Activated T-helper 1 cell treated with anti-CD3 and anti-CD28 coated beads, Interleukin-12 subunit alpha, Interleukin-12 subunit beta, Interleukin-2, Interleukin-4 antibody, amounts not matched to agents 30 ng/mL and 10 ng/mL and 1 ng/mL, durations not matched to agents 14 hours and 24 hours and 36 hours (primary cell): ENCODE measurements at regions of chr17 and their contacts with region 1.

Region 1: GRCh38 chr17:29760761-29761696 is 138.3 kb upstream of the CORO6 start:
- DNase-seq: peak; percentile 91
- H3K4me3 Mint-ChIP-seq: peak overlapping the region; percentile 97
- H3K27ac Mint-ChIP-seq: peak overlapping the region; percentile 92
- H3K4me1 Mint-ChIP-seq: peaks cover 36% of the 10 kb centered on the region
- H3K27me3 Mint-ChIP-seq: no peaks in the 10 kb centered on the region

Region 2: DNA sequence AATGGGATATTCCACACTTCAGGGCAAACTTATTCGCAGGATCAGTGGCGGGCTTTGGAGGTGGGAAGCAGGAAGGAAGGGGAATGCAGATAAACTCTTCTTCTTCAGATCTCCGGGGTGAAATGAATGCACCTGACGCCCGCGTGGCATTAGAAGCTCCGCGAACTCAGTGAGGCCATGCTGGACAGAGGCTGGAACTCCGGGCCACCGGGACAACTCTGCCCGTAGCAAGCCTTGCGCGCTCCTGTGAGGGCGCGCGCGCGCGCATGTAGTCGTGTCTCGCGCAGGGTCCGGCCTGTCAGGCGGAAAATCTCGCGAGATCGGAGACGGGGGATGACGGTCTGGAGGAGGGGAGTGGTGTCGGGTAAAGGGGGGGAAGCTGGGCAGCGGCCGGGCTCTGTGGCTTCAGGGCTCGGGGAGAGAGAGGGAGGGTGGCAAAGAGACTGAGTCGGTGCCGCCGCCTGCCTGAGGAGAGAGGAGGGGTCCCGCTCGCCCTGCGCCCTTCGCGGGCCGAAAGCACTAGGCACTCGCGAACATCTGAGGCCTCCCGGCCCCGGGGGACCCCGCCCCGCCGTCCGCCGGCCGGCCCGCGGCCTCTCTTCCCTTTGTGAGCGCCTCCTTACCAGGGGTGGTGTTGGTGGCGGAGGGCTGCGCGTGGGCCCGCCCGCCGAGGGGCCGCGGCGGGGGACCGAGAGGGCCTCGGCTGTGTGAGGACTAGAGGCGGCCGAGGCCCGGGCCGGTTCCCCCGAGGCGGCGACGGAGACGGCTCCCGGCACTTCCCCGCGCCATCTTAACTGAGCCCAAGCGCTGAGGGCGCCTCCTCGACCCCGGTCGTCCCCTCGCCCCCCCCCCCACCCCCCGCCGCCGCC is 370.8 kb before region 1 on chr17 and contains the start of gene TAOK1:
- intact Hi-C with region 1: loop called (anchors 1 kb)
- DNase-seq: peak; percentile 97
- H3K4me3 Mint-ChIP-seq: peak within 1 kb of the TSS; percentile 98
- H3K27ac Mint-ChIP-seq: peak within 1 kb of the TSS; percentile 95
- H3K4me1 Mint-ChIP-seq: peaks cover 43% of the 10 kb centered on the region
- H3K27me3 Mint-ChIP-seq: no peaks in the 10 kb centered on the region
- total RNA-seq, gene TAOK1: 45.9 and 46.9 TPM in 2 replicates

Region 3: GRCh38 chr17:29589524-29590410 is 171.3 kb before region 1 on chr17 and contains the start of gene GIT1:
- intact Hi-C with region 1: no loop called
- DNase-seq: peak; percentile 84
- H3K4me3 Mint-ChIP-seq: peak within 1 kb of the TSS; percentile 96
- H3K27ac Mint-ChIP-seq: peak within 1 kb of the TSS; percentile 87
- H3K4me1 Mint-ChIP-seq: peaks cover 63% of the 10 kb centered on the region
- H3K27me3 Mint-ChIP-seq: no peaks in the 10 kb centered on the region
- total RNA-seq, gene GIT1: 81.0 and 87.5 TPM in 2 replicates

Region 4: DNA sequence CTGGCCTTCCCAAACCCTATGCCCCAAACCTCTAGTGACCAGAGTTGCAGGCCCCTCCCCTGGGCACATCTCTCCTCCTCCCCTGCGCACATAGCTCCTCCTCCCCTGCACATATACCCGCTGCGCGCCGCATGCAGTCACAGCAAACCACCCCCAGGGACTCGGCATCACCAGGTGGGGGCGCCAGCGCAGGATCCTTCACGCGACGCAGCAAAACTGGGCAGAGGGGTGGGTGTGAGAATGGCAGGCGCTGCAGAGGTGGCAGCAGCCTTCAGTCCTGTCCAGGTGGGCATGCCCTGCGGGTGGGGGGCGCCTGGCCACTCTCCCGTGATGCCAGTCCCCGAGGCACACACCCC is 143.9 kb before region 1 on chr17:
- intact Hi-C with region 1: loop called (anchors 1 kb)
- DNase-seq: peak; percentile 86
- H3K4me3 Mint-ChIP-seq: peak overlapping the region; percentile 81
- H3K27ac Mint-ChIP-seq: peak overlapping the region; percentile 66
- H3K4me1 Mint-ChIP-seq: peaks cover 40% of the 10 kb centered on the region
- H3K27me3 Mint-ChIP-seq: peaks cover 8% of the 10 kb centered on the region

Region 5: DNA sequence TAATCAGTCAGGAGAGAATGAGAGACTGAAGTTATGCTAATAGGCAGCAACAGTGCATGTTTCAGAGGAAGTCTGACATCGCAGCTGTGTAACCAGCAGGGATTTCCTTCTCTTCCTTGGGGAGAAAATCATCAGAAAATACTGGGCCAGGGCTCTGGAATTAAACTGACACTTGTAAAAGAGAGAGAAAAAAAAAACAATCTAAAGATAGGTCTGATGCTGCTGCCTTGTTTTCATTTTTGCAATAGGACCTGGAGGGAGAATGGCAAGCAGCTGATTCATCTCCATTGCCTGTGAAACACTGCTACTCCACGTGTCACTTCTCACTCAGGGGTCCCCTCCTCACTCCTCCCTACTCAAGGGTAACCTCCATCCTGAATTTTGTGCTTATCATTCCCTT is 120.6 kb before region 1 on chr17:
- intact Hi-C with region 1: loop called (anchors 1 kb)
- DNase-seq: no peak
- H3K4me3 Mint-ChIP-seq: no peak overlapping the region
- H3K27ac Mint-ChIP-seq: peak overlapping the region; percentile 36
- H3K4me1 Mint-ChIP-seq: peaks cover 27% of the 10 kb centered on the region
- H3K27me3 Mint-ChIP-seq: no peaks in the 10 kb centered on the region

Region 6: DNA sequence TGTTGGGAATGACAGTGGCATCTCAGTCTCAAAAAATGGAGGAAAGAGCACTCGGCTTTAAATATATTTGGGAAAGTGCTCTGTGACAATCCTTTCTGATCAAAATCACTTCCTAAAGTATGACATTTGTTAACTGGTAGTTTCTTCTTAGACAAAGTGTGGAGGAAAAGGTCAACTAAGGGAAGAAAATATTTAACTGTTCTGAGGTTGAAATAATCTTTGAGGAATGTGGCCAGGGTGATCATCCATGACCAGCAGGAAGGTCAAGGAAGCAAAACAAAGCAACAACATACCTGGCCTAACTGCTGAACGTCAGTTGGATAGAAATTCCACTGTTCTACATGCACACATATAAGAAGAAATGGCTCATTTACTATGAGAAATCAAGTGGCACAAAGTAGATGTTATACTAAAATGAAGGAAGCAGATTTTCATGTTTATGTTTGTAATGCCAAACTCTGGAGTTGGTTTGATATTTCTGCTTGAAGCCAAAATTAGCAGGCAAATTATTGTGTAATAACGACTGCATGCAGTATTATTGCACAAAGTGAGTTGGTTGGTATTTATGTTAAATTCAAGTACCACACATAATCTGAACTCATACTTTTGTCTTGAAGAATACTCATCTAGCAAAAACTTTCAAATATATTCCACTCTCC is 51.0 kb before region 1 on chr17:
- intact Hi-C with region 1: loop called (anchors 1 kb)
- DNase-seq: no peak
- H3K4me3 Mint-ChIP-seq: no peak overlapping the region
- H3K27ac Mint-ChIP-seq: no peak overlapping the region
- H3K4me1 Mint-ChIP-seq: peaks cover 48% of the 10 kb centered on the region
- H3K27me3 Mint-ChIP-seq: no peaks in the 10 kb centered on the region

Region 7: GRCh38 chr17:29777663-29778062 is 16.6 kb after region 1 on chr17:
- intact Hi-C with region 1: loop called (anchors 1 kb)
- DNase-seq: no peak
- H3K4me3 Mint-ChIP-seq: no peak overlapping the region
- H3K27ac Mint-ChIP-seq: no peak overlapping the region
- H3K4me1 Mint-ChIP-seq: peaks cover 16% of the 10 kb centered on the region
- H3K27me3 Mint-ChIP-seq: no peaks in the 10 kb centered on the region